Lower leg skin (tissue), 4 donors: ENCODE measurements at regions of chr16 and their contacts with region 1.

Region 1: GRCh38 chr16:81204798-81205680 is 33.5 kb upstream of the BCO1 start:
- DNase-seq: no peak
- H3K4me3 ChIP-seq: no peak overlapping the region
- CTCF ChIP-seq: no peak
- POLR2A ChIP-seq: no peak

Region 2: DNA sequence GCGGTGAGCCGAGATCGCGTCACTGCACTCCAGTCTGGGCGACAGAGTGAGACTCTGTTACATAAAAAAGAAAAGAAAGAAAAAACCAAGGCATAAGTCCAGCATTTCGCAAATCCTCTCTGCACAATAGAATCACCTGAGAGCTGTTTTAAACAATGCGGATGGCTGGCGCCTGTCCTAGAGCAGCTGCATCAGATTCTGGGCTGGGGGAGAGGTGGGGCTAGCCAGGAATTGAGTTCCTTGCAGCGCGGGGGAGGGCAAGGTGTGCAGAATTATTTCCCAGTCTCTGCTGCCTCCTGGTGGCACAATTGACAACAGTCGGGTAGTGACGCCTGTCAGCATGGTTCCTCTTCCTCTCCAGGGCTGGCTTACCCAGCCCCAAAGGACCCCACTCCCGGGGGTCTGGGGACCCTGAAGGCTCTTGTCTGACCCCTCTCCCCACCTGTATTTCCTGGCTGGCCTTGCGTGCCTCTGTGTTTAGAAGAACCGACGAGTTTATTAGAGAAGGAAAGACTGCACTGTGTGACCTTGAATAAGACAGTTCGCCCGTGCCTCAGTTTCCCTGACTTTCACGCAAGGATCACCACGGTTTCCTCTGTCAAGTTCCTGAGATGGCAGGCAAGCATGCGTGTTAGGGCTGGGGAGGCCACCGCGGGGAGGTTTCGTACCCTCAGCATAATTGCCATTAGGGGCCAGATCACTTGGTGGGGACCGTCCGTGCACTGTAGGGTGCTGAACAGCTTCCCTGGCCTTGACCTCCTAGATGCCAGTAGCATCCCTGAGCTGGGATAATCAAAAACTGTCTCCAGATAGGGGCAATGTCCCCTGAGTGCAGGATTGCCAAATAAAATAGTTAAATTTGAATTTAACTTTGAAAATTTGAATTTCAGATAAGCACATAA is 533.1 kb after region 1 on chr16:
- intact Hi-C with region 1: loop called (anchors 10 kb)
- DNase-seq: peak; percentile 73 to 96
- H3K4me3 ChIP-seq: no peak overlapping the region
- CTCF ChIP-seq: peak in 1 of 3 donors; percentile 74
- POLR2A ChIP-seq: no peak